Ovary (tissue), 10 donors: ENCODE measurements at regions of chr15 and their contacts with region 1.

Region 1: GRCh38 chr15:61500951-61501620 is 272.0 kb upstream of the RORA start:
- DNase-seq: no peak
- H3K4me3 ChIP-seq: no peak overlapping the region
- H3K27ac ChIP-seq: no peak overlapping the region
- H3K4me1 ChIP-seq: peaks cover 2% of the 10 kb centered on the region
- H3K27me3 ChIP-seq: no peaks in the 10 kb centered on the region
- CTCF ChIP-seq: no peak
- EP300 ChIP-seq: no peak
- POLR2A ChIP-seq: no peak

Region 2: DNA sequence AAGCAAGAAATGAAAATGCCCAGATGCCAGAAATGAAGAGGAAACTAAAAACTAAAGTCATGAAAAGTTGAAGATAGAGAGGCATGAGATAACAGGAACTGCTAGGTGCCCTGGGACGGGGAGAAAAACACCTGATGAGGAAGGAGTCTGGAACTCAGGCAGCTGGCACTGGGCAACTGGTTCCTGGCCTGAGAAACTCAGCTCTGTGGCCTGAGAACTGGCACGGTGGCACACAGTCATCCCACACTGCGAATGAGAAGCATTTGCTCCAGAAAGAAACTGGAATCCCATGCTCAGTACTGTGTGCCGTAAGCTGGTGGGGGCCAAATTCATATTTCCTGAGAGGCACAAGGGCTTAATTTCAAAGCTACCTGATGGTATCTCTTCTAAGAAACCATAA is 218.4 kb before region 1 on chr15:
- intact Hi-C with region 1: loop called in 1 of 4 experiments (anchors 5 kb)
- DNase-seq: no peak
- H3K4me3 ChIP-seq: no peak overlapping the region
- H3K27ac ChIP-seq: no peak overlapping the region
- H3K4me1 ChIP-seq: no peaks in the 10 kb centered on the region
- H3K27me3 ChIP-seq: no peaks in the 10 kb centered on the region
- CTCF ChIP-seq: no peak
- EP300 ChIP-seq: no peak
- POLR2A ChIP-seq: no peak